T-cell (primary cell): ENCODE measurements at regions of chr4 and their contacts with region 1.

Region 1: GRCh38 chr4:152328596-152328995 is 207.3 kb downstream of the FBXW7 start:
- DNase-seq: no peak
- ATAC-seq: no peak
- H3K4me3 ChIP-seq: no peak overlapping the region
- H3K4me3 Mint-ChIP-seq: no peak overlapping the region
- H3K27ac ChIP-seq: no peak overlapping the region
- H3K27ac Mint-ChIP-seq: peak overlapping the region in 1 of 2 donors; percentile 73
- H3K4me1 ChIP-seq: peaks cover 0 to 3% of the 10 kb centered on the region in 2 experiments
- H3K4me1 Mint-ChIP-seq: peaks cover 20 to 24% (median 21%) of the 10 kb centered on the region in 3 donors
- H3K27me3 ChIP-seq: no peaks in the 10 kb centered on the region
- H3K27me3 Mint-ChIP-seq: no peaks in the 10 kb centered on the region

Region 2: DNA sequence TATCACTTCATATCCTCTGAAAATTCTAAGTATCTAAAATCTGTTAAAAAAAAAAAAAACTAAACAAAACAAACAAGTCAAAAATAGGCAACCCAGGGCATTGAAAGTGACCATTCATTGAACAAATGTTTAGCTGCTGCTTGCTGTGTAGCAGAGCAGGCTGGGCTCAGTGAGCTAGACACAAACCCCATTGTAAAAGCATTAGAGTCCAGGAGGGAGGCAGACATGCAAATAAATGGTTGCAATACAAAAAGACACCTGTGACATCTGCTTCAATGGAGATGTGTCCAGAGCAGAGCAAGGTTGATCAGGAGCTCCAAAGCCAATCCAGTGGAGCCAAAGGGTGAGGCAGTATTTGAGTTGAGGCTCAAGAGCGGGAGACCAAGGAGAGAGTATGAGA is 300.5 kb before region 1 on chr4:
- CTCF ChIA-PET with region 1: no interaction called
- POLR2A ChIA-PET with region 1: interaction called in 1 of 2 experiments, 12 read pairs
- DNase-seq: no peak
- ATAC-seq: no peak
- H3K4me3 ChIP-seq: no peak overlapping the region
- H3K4me3 Mint-ChIP-seq: no peak overlapping the region
- H3K27ac ChIP-seq: no peak overlapping the region
- H3K27ac Mint-ChIP-seq: no peak overlapping the region
- H3K4me1 ChIP-seq: peaks cover 0 to 20% of the 10 kb centered on the region in 2 experiments
- H3K4me1 Mint-ChIP-seq: peaks cover 0 to 3% (median 0%) of the 10 kb centered on the region in 3 donors
- H3K27me3 ChIP-seq: no peaks in the 10 kb centered on the region
- H3K27me3 Mint-ChIP-seq: no peaks in the 10 kb centered on the region